Naive thymus-derived CD8-positive, alpha-beta T cell (primary cell): ENCODE measurements at regions of chr11 and their contacts with region 1.

Region 1: GRCh38 chr11:116853461-116854073 is 16.1 kb upstream of the APOA1 start:
- DNase-seq: peak in 9 of 10 donors; percentile 32 to 84 (median 68)
- ATAC-seq: peak; percentile 95 to 96
- H3K4me3 Mint-ChIP-seq: peak overlapping the region; percentile 49 to 87 (median 64)
- H3K27ac Mint-ChIP-seq: peak overlapping the region; percentile 10 to 89 (median 84)
- H3K4me1 Mint-ChIP-seq: peaks cover 41 to 77% (median 74%) of the 10 kb centered on the region in 4 donors
- H3K27me3 Mint-ChIP-seq: no peaks in the 10 kb centered on the region

Region 2: GRCh38 chr11:116519499-116519898 is 334.1 kb before region 1 on chr11:
- POLR2A ChIA-PET with region 1: no interaction called
- DNase-seq: no peak
- ATAC-seq: no peak
- H3K4me3 Mint-ChIP-seq: no peak overlapping the region
- H3K27ac Mint-ChIP-seq: no peak overlapping the region
- H3K4me1 Mint-ChIP-seq: no peaks in the 10 kb centered on the region
- H3K27me3 Mint-ChIP-seq: peaks cover 16 to 53% (median 25%) of the 10 kb centered on the region in 5 donors

Region 3: GRCh38 chr11:116835791-116836631 is 17.6 kb before region 1 on chr11:
- POLR2A ChIA-PET with region 1: interaction called, 60 read pairs
- DNase-seq: peak; percentile 71 to 89 (median 80)
- ATAC-seq: peak; percentile 92 to 96
- H3K4me3 Mint-ChIP-seq: peak overlapping the region; percentile 66 to 88 (median 82)
- H3K27ac Mint-ChIP-seq: peak overlapping the region in 8 of 10 donors; percentile 60 to 91 (median 80)
- H3K4me1 Mint-ChIP-seq: peaks cover 5 to 18% (median 15%) of the 10 kb centered on the region in 4 donors
- H3K27me3 Mint-ChIP-seq: no peaks in the 10 kb centered on the region

Region 4: DNA sequence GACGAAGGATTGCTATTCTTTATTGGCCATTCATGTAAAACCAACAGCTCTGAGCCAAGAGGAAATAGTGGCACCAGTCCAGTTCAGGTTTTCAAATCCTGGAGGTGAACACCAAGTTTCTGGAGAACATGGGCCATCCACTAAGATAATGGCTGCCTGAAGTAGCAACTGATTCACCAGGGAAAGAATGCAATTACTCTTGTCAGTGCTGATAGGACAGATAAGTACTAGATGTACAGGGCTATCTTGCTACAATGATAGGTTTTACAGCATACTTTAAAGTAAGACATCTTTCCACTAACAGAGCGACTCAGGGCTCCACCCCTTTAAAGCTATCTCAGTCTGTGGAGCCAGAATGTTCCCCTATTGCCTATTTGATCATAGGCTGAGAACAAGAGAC is 20.7 kb after region 1 on chr11:
- POLR2A ChIA-PET with region 1: no interaction called
- DNase-seq: no peak
- ATAC-seq: no peak
- H3K4me3 Mint-ChIP-seq: no peak overlapping the region
- H3K27ac Mint-ChIP-seq: no peak overlapping the region
- H3K4me1 Mint-ChIP-seq: peaks cover 0 to 5% (median 1%) of the 10 kb centered on the region in 4 donors
- H3K27me3 Mint-ChIP-seq: no peaks in the 10 kb centered on the region

Region 5: GRCh38 chr11:116913000-116913399 is 59.4 kb after region 1 on chr11:
- POLR2A ChIA-PET with region 1: no interaction called
- DNase-seq: no peak
- ATAC-seq: no peak
- H3K4me3 Mint-ChIP-seq: no peak overlapping the region
- H3K27ac Mint-ChIP-seq: no peak overlapping the region
- H3K4me1 Mint-ChIP-seq: peaks cover 13 to 39% (median 21%) of the 10 kb centered on the region in 4 donors
- H3K27me3 Mint-ChIP-seq: no peaks in the 10 kb centered on the region